ENCODE measurements at regions of chr2 and their contacts with region 1.

Region 1: DNA sequence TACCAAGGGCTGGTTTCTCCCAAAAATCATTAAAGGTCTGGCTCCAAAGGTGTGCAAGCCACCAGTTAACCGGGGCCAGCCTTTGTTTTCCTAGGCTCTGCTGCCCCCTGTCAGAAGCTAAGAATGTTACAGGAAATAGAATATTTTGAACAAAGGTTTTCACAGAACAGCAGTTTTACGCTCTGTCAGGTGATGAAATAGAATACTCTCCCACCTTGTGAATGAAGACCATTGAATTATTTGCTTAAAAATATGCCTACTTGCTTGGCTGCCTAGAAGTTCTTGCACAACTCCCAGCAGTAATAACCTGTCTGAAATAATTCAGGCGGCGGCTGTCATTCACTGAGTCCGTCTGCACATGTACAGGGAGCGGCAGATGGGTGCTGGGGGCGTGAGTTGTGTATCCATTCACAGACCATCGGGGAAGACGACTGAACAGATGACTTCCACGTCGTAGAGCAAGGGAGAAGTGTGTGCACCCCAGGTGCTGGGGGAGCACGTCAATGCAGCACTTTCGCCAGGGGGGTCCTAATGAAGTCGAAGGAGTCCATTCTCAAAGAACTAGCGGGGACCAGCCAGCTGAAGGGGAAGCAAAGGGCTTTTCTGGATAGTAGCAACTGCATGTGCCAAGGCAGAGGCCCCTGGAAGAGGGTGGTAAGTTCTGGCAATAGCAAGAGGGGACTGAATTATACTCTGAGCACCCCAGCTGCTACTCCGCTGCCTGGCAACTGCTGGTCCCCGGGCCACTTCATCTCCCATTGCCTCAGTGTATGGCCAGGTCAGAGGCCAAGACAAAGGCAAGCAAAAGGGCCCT is 56.1 kb downstream of the SF3B1 start:
- DNase-seq: peak; percentile 63
- ATAC-seq: peak; percentile 87
- H3K4me3 ChIP-seq: peak overlapping the region; percentile 57
- H3K27ac ChIP-seq: no peak overlapping the region
- H3K4me1 ChIP-seq: no peaks in the 10 kb centered on the region
- H3K27me3 ChIP-seq: no peaks in the 10 kb centered on the region
- CTCF ChIP-seq: peak; percentile 93

Region 2: GRCh38 chr2:196239622-196240587 is 1138.8 kb before region 1 on chr2:
- CTCF ChIA-PET with region 1: no interaction called
- POLR2A ChIA-PET with region 1: no interaction called
- intact Hi-C with region 1: no loop called
- DNase-seq: peak; percentile 97
- ATAC-seq: peak; percentile 97
- H3K4me3 ChIP-seq: peak overlapping the region; percentile 25; the same call in 1 of the 2 replicates
- H3K27ac ChIP-seq: peak overlapping the region; percentile 94
- H3K4me1 ChIP-seq: peaks cover 25% of the 10 kb centered on the region
- H3K27me3 ChIP-seq: no peaks in the 10 kb centered on the region
- CTCF ChIP-seq: 0 out of 2 replicates have a peak, but pooled peaks have one; percentile 33

Region 3: DNA sequence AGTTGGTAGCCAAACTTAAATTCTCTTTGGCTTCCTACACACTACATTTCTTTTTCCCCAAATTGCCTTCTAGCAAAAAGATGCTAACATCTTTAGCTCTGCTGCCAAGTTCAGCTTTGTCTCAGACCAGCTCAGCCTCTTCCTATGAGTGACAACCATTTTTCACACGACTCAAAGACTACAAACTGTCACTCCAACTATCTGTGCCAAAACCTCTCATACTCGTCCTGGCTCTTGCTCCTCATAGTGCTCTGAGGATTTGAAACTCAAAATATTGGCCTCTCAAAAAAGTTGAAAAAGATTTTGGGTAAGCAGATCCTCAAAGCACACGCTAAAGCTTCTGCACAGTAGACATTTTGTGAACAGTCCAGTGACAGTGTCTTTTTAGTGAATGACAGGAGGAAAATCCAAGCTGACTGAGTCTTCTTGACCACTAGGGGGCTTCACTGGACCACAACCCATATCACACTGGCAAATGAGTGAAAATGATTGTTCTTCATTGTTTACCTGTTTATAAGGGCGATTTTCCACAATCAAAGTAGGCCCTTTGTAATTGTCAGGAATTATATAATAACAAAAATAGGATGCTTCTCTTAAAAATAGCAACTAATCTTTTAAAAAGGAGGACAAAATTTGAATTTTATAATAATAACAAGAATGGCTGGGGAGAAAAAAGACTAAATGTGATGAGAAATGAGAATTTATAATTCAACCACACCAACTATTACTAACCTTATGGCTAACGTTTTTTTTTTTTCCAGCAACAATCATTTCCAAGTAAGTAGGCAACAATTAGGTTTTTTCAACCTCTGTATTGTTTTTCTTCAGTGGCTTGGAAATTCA is 366.7 kb before region 1 on chr2:
- CTCF ChIA-PET with region 1: interaction called, 6 read pairs
- POLR2A ChIA-PET with region 1: no interaction called
- intact Hi-C with region 1: loop called (anchors 1 kb)
- DNase-seq: peak; percentile 70
- ATAC-seq: peak; percentile 85
- H3K4me3 ChIP-seq: no peak overlapping the region
- H3K27ac ChIP-seq: no peak overlapping the region
- H3K4me1 ChIP-seq: peaks cover 16% of the 10 kb centered on the region
- H3K27me3 ChIP-seq: no peaks in the 10 kb centered on the region
- CTCF ChIP-seq: peak; percentile 92

Region 4: DNA sequence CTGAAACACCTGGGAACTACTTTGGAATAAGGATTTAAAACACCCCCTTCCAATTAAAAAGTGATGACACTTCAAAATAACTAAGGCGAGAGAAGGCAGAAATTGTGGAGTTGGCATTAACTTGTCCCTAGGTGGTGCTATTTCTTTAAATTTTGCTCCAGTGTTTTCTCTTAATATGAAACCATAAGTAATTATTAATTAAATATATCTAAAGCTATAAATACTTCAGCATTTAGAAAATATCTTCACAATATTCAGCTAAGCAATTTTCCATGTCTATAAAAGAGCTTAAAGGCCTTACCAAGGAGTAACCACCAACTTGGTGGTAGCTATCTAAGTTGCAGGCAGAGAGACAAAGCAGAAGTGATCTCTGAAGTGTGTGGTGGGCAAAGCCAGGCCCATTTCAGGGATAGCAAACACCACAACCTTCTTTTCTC is 265.4 kb before region 1 on chr2:
- CTCF ChIA-PET with region 1: no interaction called
- POLR2A ChIA-PET with region 1: no interaction called
- intact Hi-C with region 1: loop called (anchors 1 kb)
- DNase-seq: peak; percentile 61
- ATAC-seq: peak; percentile 37; the same call in 1 of the 2 replicates
- H3K4me3 ChIP-seq: no peak overlapping the region
- H3K27ac ChIP-seq: no peak overlapping the region
- H3K4me1 ChIP-seq: peaks cover 4% of the 10 kb centered on the region; the same call in 1 of the 2 replicates
- H3K27me3 ChIP-seq: no peaks in the 10 kb centered on the region
- CTCF ChIP-seq: peak; percentile 71

Region 5: GRCh38 chr2:197191177-197191939 is 187.3 kb before region 1 on chr2:
- CTCF ChIA-PET with region 1: no interaction called
- POLR2A ChIA-PET with region 1: no interaction called
- intact Hi-C with region 1: loop called (anchors 1 kb)
- DNase-seq: peak; percentile 76
- ATAC-seq: peak; percentile 37
- H3K4me3 ChIP-seq: no peak overlapping the region
- H3K27ac ChIP-seq: no peak overlapping the region
- H3K4me1 ChIP-seq: no peaks in the 10 kb centered on the region
- H3K27me3 ChIP-seq: no peaks in the 10 kb centered on the region
- CTCF ChIP-seq: peak; percentile 88

Region 6: GRCh38 chr2:197216361-197216979 is 162.2 kb before region 1 on chr2:
- CTCF ChIA-PET with region 1: no interaction called
- POLR2A ChIA-PET with region 1: no interaction called
- intact Hi-C with region 1: no loop called
- DNase-seq: no peak
- ATAC-seq: no peak
- H3K4me3 ChIP-seq: no peak overlapping the region
- H3K27ac ChIP-seq: no peak overlapping the region
- H3K4me1 ChIP-seq: peaks cover 9% of the 10 kb centered on the region
- H3K27me3 ChIP-seq: no peaks in the 10 kb centered on the region
- CTCF ChIP-seq: no peak

Region 7: DNA sequence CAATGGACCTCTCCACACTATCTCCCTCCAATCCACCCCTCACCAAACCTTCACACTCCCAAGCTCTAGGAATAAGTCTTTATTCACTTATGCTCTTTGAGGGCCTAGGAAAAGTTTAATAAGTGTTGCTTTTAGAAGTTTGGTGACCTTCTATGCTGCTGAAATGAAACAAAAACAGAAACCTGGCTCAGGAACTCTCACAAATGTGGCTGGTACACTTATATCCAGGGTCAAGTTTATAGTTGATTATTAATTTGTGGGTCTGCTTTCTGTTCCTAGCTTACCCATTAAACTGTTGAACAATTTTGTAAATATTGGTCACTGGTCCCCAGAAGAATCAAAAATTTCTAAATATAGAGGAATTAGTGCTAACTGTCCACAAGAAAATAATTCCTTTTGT is 53.9 kb before region 1 on chr2:
- CTCF ChIA-PET with region 1: no interaction called
- POLR2A ChIA-PET with region 1: no interaction called
- intact Hi-C with region 1: loop called (anchors 1 kb)
- DNase-seq: no peak
- ATAC-seq: no peak
- H3K4me3 ChIP-seq: no peak overlapping the region
- H3K27ac ChIP-seq: no peak overlapping the region
- H3K4me1 ChIP-seq: no peaks in the 10 kb centered on the region
- H3K27me3 ChIP-seq: peaks cover 7% of the 10 kb centered on the region; the same call in 1 of the 2 replicates
- CTCF ChIP-seq: no peak

Region 8: DNA sequence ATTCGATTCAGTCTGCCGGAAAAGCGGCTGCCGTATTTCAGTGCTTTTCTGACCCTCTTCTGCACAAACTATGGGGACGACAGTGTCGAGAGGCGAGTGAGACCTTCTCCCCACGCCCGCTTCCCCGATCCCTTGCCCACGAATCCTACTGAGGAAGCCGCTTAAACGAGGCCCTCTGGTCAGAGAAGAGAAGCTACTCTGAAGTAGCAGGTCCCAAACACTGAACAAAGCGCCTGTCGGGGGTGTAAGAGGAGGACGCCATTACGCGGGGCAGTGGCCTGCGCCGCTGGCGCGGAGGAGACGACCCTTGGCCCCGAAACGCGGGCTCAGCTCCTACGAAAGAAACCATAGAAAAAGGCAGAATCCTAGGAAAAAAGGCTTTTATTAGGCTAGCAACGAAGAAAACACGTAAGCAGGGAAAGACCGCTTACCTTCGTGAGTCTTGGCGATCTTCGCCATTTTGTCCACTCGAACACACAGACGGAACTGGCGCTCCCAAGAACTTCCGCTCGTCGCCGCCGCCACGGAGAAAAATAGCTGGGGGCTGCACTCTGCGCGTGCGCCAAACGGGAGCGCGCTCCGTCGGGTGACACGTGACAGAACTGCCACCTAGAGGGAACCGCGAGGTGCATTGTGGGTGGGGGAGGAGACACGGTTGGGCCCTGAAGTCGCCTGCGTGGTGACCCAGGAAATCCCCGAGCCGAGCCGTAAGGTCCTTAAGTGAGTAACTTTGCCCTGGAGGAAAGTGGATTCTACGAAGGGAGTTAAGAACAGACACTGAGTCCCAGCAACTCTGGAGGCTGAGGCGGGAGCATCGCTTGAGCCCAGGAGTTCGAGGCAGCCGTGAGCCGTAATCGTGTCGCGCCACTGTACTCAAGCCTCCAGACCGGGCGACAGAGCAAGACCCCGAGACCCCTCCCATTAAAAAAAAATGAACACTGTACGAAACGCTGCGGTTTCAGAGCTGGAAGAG is 56.1 kb after region 1 on chr2 and contains the start of gene SF3B1:
- CTCF ChIA-PET with region 1: no interaction called
- POLR2A ChIA-PET with region 1: no interaction called
- intact Hi-C with region 1: no loop called
- DNase-seq: peak; percentile 98
- ATAC-seq: peak; percentile 91
- H3K4me3 ChIP-seq: peak within 1 kb of the TSS; percentile 81
- H3K27ac ChIP-seq: peak within 1 kb of the TSS; percentile 76
- H3K4me1 ChIP-seq: peaks cover 23% of the 10 kb centered on the region
- H3K27me3 ChIP-seq: no peaks in the 10 kb centered on the region
- CTCF ChIP-seq: no peak
- total RNA-seq, gene SF3B1: 125 and 143 TPM in 2 replicates

Region 9: DNA sequence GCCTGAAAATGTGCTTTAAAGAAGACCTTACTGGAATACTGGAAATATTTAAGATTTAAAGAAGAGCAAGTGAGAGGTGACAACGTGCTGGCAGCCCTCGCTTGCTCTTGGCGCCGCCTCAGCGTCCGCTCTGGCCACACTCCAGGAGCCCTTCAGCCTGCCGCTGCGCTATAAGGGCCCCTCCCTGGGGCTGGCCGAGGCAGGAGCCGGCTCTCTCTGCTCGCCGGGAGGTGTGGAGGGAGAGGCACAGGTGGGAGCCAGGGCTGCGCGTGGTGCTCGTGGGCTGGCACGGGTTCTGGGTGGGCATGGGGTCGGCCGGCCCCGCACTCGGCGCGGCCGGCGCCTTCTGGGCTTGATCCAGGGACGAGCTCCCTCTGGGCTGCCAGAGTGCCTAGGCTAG is 71.8 kb after region 1 on chr2:
- CTCF ChIA-PET with region 1: no interaction called
- POLR2A ChIA-PET with region 1: no interaction called
- intact Hi-C with region 1: no loop called
- DNase-seq: no peak
- ATAC-seq: no peak
- H3K4me3 ChIP-seq: no peak overlapping the region
- H3K27ac ChIP-seq: no peak overlapping the region
- H3K4me1 ChIP-seq: peaks cover 11% of the 10 kb centered on the region
- H3K27me3 ChIP-seq: no peaks in the 10 kb centered on the region
- CTCF ChIP-seq: no peak

Measured in PC-3 (cell line).